ENCODE measurements at regions of chr10 and their contacts with region 1.

Region 1: GRCh38 chr10:121734589-121735045 is 136.4 kb upstream of the FGFR2 start:
- DNase-seq: no peak
- H3K4me3 ChIP-seq: no peak overlapping the region
- H3K27ac ChIP-seq: no peak overlapping the region
- H3K4me1 ChIP-seq: no peaks in the 10 kb centered on the region
- H3K27me3 ChIP-seq: no peaks in the 10 kb centered on the region
- CTCF ChIP-seq: peak; percentile 24 to 50 (median 44)
- EP300 ChIP-seq: no peak
- POLR2A ChIP-seq: no peak

Region 2: DNA sequence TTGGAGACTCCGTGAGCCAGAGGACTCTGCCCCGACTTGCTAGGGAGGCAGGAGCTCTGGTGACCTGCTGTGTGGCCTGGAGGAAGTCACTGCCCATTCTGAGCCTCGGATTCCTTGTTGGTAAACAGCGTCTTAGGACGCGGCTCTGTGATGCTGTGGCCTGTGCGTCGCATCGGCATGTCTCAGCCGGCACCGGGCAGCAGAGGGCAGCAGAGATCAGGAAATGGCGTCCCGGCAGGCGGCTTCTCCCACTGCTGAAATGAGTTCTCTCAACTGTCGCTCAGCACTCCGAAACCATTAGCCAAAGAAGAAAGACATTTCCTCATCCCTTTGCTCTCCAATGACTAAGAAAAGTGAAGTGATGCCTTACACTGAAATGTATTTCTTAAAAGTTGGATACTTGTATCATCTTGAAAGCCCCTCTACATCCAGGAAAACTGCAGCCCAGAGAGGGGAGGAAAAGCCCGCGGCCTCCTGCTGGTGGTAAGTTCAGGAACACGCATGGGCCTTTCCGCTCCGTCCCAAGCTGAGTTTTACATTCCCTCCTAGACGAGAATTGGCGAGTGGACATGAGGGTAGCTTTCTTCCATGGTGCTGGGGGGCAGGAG is 791.7 kb before region 1 on chr10:
- intact Hi-C with region 1: loop called (anchors 1 kb)
- DNase-seq: peak; percentile 88
- H3K4me3 ChIP-seq: no peak overlapping the region
- H3K27ac ChIP-seq: no peak overlapping the region
- H3K4me1 ChIP-seq: peaks cover 0 to 21% (median 16%) of the 10 kb centered on the region in 4 donors
- H3K27me3 ChIP-seq: no peaks in the 10 kb centered on the region
- CTCF ChIP-seq: peak; percentile 84 to 87 (median 86)
- EP300 ChIP-seq: no peak
- POLR2A ChIP-seq: no peak

Region 3: GRCh38 chr10:121608469-121609190 is 126.0 kb before region 1 on chr10:
- intact Hi-C with region 1: loop called (anchors 5 kb)
- DNase-seq: peak; percentile 71
- H3K4me3 ChIP-seq: peak overlapping the region; percentile 26 to 46 (median 34)
- H3K27ac ChIP-seq: peak overlapping the region in 2 of 4 donors; percentile 6 to 45
- H3K4me1 ChIP-seq: peaks cover 0 to 13% (median 4%) of the 10 kb centered on the region in 4 donors
- H3K27me3 ChIP-seq: no peaks in the 10 kb centered on the region
- CTCF ChIP-seq: peak; percentile 32 to 96 (median 64)
- EP300 ChIP-seq: no peak
- POLR2A ChIP-seq: no peak

Region 4: GRCh38 chr10:121851786-121852185 is 117.2 kb after region 1 on chr10:
- intact Hi-C with region 1: no loop called
- DNase-seq: no peak
- H3K4me3 ChIP-seq: no peak overlapping the region
- H3K27ac ChIP-seq: no peak overlapping the region
- H3K4me1 ChIP-seq: no peaks in the 10 kb centered on the region
- H3K27me3 ChIP-seq: no peaks in the 10 kb centered on the region
- CTCF ChIP-seq: no peak
- EP300 ChIP-seq: no peak
- POLR2A ChIP-seq: no peak

Region 5: DNA sequence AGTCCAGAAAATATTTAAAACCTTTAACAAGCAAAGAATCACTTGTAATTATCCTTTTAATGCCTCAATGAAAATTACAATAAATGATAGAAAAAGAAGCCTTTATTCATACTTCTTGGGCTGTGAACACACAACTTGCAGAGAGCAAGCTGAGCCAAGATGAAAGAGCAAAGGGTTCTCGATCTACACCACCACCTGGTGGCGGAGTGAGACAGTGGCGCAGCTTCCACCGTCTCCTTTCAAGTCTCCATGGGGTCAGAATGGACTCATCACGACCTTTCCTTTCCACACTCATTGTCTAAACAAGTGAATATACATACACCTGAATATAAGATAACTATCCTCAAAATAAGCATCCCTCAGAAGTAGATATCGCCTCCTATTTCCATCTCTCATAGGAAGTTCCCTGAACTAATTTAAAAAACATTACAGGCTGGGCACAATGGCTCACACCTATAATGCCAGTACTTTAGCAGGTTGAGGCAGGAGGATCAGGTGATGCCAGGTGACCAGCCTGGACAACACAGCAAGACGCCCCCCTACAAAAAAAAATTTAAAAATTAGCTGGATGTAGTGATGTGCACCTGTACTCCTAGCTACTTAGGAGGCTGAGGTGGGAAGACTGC is 152.5 kb after region 1 on chr10:
- intact Hi-C with region 1: loop called (anchors 10 kb)
- DNase-seq: peak; percentile 75
- H3K4me3 ChIP-seq: no peak overlapping the region
- H3K27ac ChIP-seq: no peak overlapping the region
- H3K4me1 ChIP-seq: no peaks in the 10 kb centered on the region
- H3K27me3 ChIP-seq: no peaks in the 10 kb centered on the region
- CTCF ChIP-seq: peak; percentile 67 to 81 (median 77)
- EP300 ChIP-seq: no peak
- POLR2A ChIP-seq: no peak

Region 6: GRCh38 chr10:122021379-122021778 is 286.8 kb after region 1 on chr10:
- intact Hi-C with region 1: no loop called
- DNase-seq: peak; percentile 86
- H3K4me3 ChIP-seq: peak overlapping the region; percentile 14 to 38 (median 26)
- H3K27ac ChIP-seq: peak overlapping the region; percentile 80 to 85 (median 81)
- H3K4me1 ChIP-seq: peaks cover 0 to 40% (median 31%) of the 10 kb centered on the region in 4 donors
- H3K27me3 ChIP-seq: no peaks in the 10 kb centered on the region
- CTCF ChIP-seq: no peak
- EP300 ChIP-seq: peak in 2 of 4 donors; percentile 46 to 73
- POLR2A ChIP-seq: no peak

Measured in sigmoid colon (tissue), 7 donors.